ENCODE measurements at regions of chr3 and their contacts with region 1.

Region 1: DNA sequence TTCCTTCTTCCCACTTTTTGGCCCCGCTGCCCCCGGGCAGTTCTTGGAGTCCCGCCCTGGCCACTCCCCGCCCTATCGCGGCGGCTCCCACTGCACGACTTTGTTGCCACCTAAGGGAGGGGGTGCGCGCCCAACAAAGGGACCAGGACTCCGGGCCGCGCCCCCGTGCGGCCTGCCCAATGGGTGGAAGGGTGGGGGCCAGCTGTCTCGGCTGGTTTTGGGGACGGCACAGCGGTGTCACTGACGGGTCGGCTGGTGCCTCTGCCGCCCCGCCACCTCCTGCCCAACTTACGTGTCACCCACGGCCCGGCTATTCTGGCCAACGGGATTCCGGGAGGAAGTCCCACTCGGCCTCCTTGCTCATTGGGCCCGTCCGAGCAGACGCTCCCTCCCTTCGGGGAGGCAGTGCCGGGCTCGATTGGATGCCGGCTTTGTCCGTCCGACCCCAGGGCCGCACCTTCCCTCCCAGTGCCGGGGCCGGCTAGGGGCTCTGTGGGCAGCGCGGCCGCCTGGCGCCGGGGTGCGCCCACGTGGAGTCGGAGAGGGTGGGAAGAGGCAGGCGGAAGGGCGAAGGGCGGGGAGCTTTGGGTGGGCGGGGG is at the start of gene GOLIM4:
- DNase-seq: peak; percentile 97 to 99 (median 98)
- H3K4me3 ChIP-seq: peak within 1 kb of the TSS; percentile 80 to 89 (median 84)
- H3K27ac ChIP-seq: peak within 1 kb of the TSS; percentile 40 to 79
- H3K4me1 ChIP-seq: peaks cover 15 to 52% (median 35%) of the 10 kb centered on the region in 4 experiments
- H3K27me3 ChIP-seq: no peaks in the 10 kb centered on the region

Region 2: DNA sequence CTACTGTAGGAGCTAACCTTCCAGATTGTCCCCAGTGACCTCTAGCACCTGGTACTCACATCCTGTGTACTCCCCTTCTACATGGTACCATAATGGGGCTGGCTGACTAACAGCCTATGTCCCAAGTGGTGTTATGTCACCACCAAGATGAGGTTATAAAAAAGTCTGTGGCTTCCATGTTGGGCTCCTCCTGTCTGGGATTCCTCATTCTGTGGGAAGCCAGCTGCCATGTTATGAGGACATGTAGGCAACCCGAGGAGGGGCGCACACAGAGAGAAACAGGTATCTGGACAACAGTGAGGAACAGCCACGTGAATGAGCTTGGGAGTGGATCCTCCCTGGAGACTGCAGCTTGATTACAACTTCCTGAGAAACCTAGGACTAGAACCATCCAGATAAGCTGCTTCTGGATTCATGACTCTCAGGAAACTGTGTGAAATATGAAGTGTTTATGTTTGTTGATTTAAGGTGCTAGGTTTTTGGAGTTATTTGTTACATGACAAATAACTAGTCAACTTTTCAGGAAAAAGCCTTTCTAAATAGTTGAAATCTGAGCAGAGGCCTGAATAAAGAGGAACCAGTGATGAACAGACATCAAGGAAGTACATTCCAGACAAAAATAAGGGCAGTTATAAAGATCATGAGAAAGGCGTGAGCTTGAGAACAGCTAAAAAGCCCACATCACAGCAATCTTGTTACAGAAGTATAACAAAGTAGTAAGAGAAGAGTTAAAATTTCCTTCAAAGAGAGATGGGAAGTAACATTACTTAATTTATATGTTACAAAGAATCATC is 21.7 kb before region 1 on chr3:
- CTCF ChIA-PET with region 1: interaction called, 21 read pairs
- POLR2A ChIA-PET with region 1: no interaction called
- DNase-seq: peak in 2 of 3 donors; percentile 20 to 31
- H3K4me3 ChIP-seq: no peak overlapping the region
- H3K27ac ChIP-seq: peak overlapping the region in 1 of 2 experiments; percentile 30
- H3K4me1 ChIP-seq: peaks cover 2 to 13% (median 4%) of the 10 kb centered on the region in 4 experiments
- H3K27me3 ChIP-seq: no peaks in the 10 kb centered on the region

Region 3: DNA sequence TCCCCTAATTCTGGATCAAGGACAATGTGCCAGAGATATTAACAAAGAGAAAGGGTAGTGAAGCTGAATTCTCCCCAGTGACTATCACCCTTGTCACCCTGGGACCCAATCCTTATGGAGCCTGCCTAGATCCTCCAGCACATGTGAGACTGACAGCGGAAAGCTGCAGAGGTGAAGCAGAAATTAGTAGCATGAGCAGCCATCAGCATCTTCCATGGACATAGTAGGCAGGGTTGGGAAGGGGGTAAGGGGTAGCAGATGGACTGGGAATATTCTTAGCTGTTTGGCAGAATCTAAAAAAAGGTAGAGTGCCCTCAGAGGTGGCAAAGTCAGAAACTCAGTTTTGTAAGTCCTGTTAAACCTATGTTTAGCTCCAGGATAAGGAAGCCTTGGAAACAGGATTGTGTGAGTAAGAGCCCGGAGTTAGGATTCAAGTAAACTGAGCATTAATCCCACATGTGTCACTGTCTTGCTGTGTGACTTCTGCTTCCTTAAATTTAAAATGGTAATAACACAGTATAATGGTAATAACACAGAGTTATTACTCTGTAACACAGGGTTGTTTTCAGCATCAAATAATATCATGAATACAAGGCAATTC is 14.4 kb before region 1 on chr3:
- CTCF ChIA-PET with region 1: interaction called, 21 read pairs
- POLR2A ChIA-PET with region 1: interaction called, 4 read pairs
- DNase-seq: no peak
- H3K4me3 ChIP-seq: no peak overlapping the region
- H3K27ac ChIP-seq: no peak overlapping the region
- H3K4me1 ChIP-seq: peaks cover 0 to 9% (median 1%) of the 10 kb centered on the region in 4 experiments
- H3K27me3 ChIP-seq: no peaks in the 10 kb centered on the region

Region 4: DNA sequence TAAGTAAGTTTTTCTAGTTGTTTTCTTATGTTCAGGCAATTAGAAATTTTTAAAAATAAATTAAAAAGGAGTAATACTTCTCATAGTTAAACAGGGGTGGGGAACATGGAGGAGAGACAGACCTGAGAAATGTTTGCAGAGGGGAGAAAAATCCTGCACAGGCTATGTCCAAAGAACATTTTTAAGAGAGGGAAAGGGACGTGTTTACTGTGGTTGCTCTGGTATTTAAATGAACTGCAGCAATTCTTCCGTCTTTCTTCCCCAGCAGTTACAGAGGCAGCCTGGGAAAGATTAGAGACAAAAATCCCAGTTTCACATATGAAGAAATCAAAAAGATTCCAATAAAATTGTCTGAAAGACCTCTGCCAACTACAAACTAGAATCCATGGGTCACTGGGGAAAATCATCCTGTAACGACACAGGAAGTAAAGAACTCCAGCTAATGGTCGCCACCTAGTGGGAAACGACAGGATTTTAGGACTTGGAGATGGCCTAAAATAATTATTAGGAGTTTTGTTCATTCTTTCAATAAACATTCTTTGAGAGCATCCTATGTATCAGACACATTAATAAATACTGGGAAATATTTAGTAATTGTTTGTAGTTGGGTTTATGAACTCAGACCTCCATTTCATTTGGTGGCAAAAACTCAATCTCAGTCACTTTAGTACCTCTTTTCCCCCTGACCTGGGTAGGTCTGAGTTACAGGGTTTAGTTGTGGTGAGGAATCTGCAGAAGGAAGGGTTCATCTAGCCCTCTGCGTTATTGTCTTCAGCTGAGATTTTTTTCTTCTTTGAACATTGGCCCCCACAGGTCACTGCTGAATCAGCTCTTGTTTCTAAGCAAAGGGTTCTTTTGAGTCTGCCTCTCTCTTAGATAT is 69.9 kb after region 1 on chr3:
- CTCF ChIA-PET with region 1: interaction called, 20 read pairs
- POLR2A ChIA-PET with region 1: no interaction called
- DNase-seq: peak; percentile 77 to 83 (median 80)
- H3K4me3 ChIP-seq: peak overlapping the region in 5 of 7 experiments; percentile 37 to 72 (median 44)
- H3K27ac ChIP-seq: peak overlapping the region in 1 of 2 experiments; percentile 55
- H3K4me1 ChIP-seq: peaks cover 3 to 11% (median 5%) of the 10 kb centered on the region in 4 experiments
- H3K27me3 ChIP-seq: no peaks in the 10 kb centered on the region